ENCODE measurements at regions of chr19 and their contacts with region 1.

Region 1: DNA sequence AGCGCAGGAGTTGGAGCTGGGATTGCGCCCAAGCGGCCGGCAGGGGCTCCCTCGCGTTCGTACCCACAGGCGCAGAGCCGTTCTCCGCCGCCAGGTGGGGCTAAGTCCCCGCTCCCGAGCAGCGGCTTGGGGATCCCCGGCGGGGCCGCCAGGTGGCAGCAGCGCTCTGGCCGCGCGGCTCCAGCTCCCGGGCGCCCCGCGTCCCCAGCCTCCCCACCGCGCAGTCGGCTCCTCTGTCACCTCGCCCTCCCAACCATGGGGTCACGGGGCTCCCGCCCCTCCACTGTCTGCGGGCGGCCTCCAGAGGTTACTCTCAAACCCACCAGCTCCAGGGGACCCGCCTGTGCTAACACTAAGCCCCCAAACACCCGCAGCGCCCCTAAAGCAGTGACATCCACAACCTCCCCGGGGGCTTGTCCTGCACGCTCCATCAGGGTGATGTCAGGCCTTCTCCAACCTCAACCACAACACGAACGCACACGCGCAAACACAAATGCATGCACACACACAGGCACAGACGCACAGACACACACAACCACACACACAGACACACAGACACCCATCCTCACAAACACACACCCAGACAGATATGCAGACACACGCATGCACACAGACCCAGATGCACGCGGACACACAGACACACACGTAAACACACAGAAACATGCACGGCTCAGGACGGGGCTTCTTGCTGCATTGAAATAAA is 18.4 kb upstream of the KCTD15 start:
- DNase-seq: peak; percentile 98
- H3K4me3 ChIP-seq: peak overlapping the region in 1 of 2 experiments; percentile 53; a peak in 2 of 4 replicates
- H3K27ac ChIP-seq: no peak overlapping the region
- H3K4me1 ChIP-seq: peaks cover 0 to 21% of the 10 kb centered on the region in 2 experiments; a peak in 1 of 4 replicates
- H3K27me3 ChIP-seq: no peaks in the 10 kb centered on the region; the same call in 1 of the 2 replicates
- CTCF ChIP-seq: peak; percentile 97
- EP300 ChIP-seq: no peak
- RAD21 ChIP-seq: peak; percentile 99

Region 2: GRCh38 chr19:33416307-33417215 is 361.7 kb before region 1 on chr19:
- CTCF ChIA-PET with region 1: interaction called, 155 read pairs
- POLR2A ChIA-PET with region 1: no interaction called
- DNase-seq: peak; percentile 87
- H3K4me3 ChIP-seq: no peak overlapping the region; a peak in 1 of 4 replicates
- H3K27ac ChIP-seq: no peak overlapping the region
- H3K4me1 ChIP-seq: peaks cover 0 to 40% of the 10 kb centered on the region in 2 experiments; a peak in 1 of 4 replicates
- H3K27me3 ChIP-seq: no peaks in the 10 kb centered on the region
- CTCF ChIP-seq: peak; percentile 61
- EP300 ChIP-seq: no peak
- RAD21 ChIP-seq: peak; percentile 77

Region 3: GRCh38 chr19:33740811-33741396 is 37.3 kb before region 1 on chr19:
- CTCF ChIA-PET with region 1: no interaction called
- POLR2A ChIA-PET with region 1: no interaction called
- DNase-seq: no peak
- H3K4me3 ChIP-seq: no peak overlapping the region
- H3K27ac ChIP-seq: no peak overlapping the region
- H3K4me1 ChIP-seq: peaks cover 0 to 3% of the 10 kb centered on the region in 2 experiments; a peak in 1 of 4 replicates
- H3K27me3 ChIP-seq: no peaks in the 10 kb centered on the region
- CTCF ChIP-seq: no peak
- EP300 ChIP-seq: no peak
- RAD21 ChIP-seq: no peak

Region 4: GRCh38 chr19:33795370-33796163 is 17.3 kb after region 1 on chr19:
- CTCF ChIA-PET with region 1: interaction called, 119 read pairs
- POLR2A ChIA-PET with region 1: interaction called, 5 read pairs
- DNase-seq: peak; percentile 96
- H3K4me3 ChIP-seq: peak overlapping the region; percentile 49 to 69
- H3K27ac ChIP-seq: peak overlapping the region; percentile 80 to 82
- H3K4me1 ChIP-seq: peaks cover 0 to 37% of the 10 kb centered on the region in 2 experiments; a peak in 2 of 4 replicates
- H3K27me3 ChIP-seq: no peaks in the 10 kb centered on the region
- CTCF ChIP-seq: peak; percentile 90; the same call in 1 of the 2 replicates
- EP300 ChIP-seq: no peak
- RAD21 ChIP-seq: peak; percentile 55; the same call in 1 of the 2 replicates

Region 5: DNA sequence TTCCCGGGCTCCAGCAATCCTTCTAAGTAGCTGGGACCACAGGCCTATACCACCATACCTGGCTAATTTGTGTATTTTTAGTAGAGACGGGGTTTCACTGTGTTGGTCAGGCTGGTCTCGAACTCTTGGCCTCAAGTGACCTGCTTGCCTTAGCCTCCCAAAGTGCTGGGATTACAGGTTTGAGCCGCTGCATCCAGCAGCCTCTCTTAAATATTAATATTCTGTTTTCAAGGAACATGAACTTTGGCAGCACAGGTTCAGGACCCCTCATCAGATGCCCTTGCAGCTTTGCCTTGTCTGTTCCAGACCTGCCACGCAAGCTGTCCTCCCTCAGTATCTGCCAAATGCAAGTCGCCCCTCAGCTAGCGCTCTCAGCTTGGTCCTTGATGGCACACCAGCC is 185.3 kb after region 1 on chr19:
- CTCF ChIA-PET with region 1: interaction called, 11 read pairs
- POLR2A ChIA-PET with region 1: no interaction called
- DNase-seq: no peak
- H3K4me3 ChIP-seq: no peak overlapping the region
- H3K27ac ChIP-seq: no peak overlapping the region
- H3K4me1 ChIP-seq: no peaks in the 10 kb centered on the region
- H3K27me3 ChIP-seq: no peaks in the 10 kb centered on the region
- CTCF ChIP-seq: no peak
- EP300 ChIP-seq: no peak
- RAD21 ChIP-seq: no peak

Region 6: GRCh38 chr19:34067861-34068271 is 289.6 kb after region 1 on chr19:
- CTCF ChIA-PET with region 1: interaction called, 14 read pairs
- POLR2A ChIA-PET with region 1: no interaction called
- DNase-seq: no peak
- H3K4me3 ChIP-seq: no peak overlapping the region
- H3K27ac ChIP-seq: no peak overlapping the region
- H3K4me1 ChIP-seq: no peaks in the 10 kb centered on the region
- H3K27me3 ChIP-seq: no peaks in the 10 kb centered on the region; the same call in 1 of the 2 replicates
- CTCF ChIP-seq: no peak
- EP300 ChIP-seq: no peak
- RAD21 ChIP-seq: no peak

Region 7: GRCh38 chr19:34120846-34121639 is 342.8 kb after region 1 on chr19:
- CTCF ChIA-PET with region 1: interaction called, 29 read pairs
- POLR2A ChIA-PET with region 1: no interaction called
- DNase-seq: peak; percentile 65
- H3K4me3 ChIP-seq: no peak overlapping the region; a peak in 1 of 4 replicates
- H3K27ac ChIP-seq: no peak overlapping the region
- H3K4me1 ChIP-seq: no peaks in the 10 kb centered on the region
- H3K27me3 ChIP-seq: no peaks in the 10 kb centered on the region; the same call in 1 of the 2 replicates
- CTCF ChIP-seq: peak; percentile 70
- EP300 ChIP-seq: no peak
- RAD21 ChIP-seq: peak; percentile 64